CD8-positive, alpha-beta T cell (primary cell): ENCODE measurements at regions of chr2 and their contacts with region 1.

Region 1: GRCh38 chr2:127081826-127082633 is 24.9 kb downstream of the BIN1 start:
- DNase-seq: peak; percentile 67 to 94 (median 82)
- ATAC-seq: peak; percentile 66
- H3K4me3 ChIP-seq: peak overlapping the region; percentile 84 to 94
- H3K4me3 Mint-ChIP-seq: peak overlapping the region; percentile 90
- H3K27ac ChIP-seq: peak overlapping the region; percentile 94 to 96
- H3K27ac Mint-ChIP-seq: peak overlapping the region; percentile 99
- H3K4me1 ChIP-seq: peaks cover 94% of the 10 kb centered on the region
- H3K4me1 Mint-ChIP-seq: peaks cover 85% of the 10 kb centered on the region
- H3K27me3 ChIP-seq: no peaks in the 10 kb centered on the region
- H3K27me3 Mint-ChIP-seq: no peaks in the 10 kb centered on the region
- CTCF ChIP-seq: no peak

Region 2: GRCh38 chr2:127106951-127107621 is 25.1 kb after region 1 on chr2 and contains the start of gene BIN1:
- CTCF ChIA-PET with region 1: interaction called, 4 read pairs
- POLR2A ChIA-PET with region 1: interaction called, 9 read pairs
- intact Hi-C with region 1: loop called (anchors 1 kb)
- DNase-seq: peak; percentile 35 to 90 (median 69)
- ATAC-seq: peak; percentile 86
- H3K4me3 ChIP-seq: peak within 1 kb of the TSS; percentile 65 to 77
- H3K4me3 Mint-ChIP-seq: peak within 1 kb of the TSS; percentile 87
- H3K27ac ChIP-seq: peak within 1 kb of the TSS in 1 of 2 experiments; percentile 0
- H3K27ac Mint-ChIP-seq: peak within 1 kb of the TSS; percentile 12
- H3K4me1 ChIP-seq: peaks cover 6% of the 10 kb centered on the region
- H3K4me1 Mint-ChIP-seq: peaks cover 6% of the 10 kb centered on the region
- H3K27me3 ChIP-seq: peaks cover 4 to 14% of the 10 kb centered on the region in 2 experiments
- H3K27me3 Mint-ChIP-seq: peaks cover 12% of the 10 kb centered on the region
- CTCF ChIP-seq: no peak
- total RNA-seq, gene BIN1: 92.1 to 92.4 TPM

Region 3: DNA sequence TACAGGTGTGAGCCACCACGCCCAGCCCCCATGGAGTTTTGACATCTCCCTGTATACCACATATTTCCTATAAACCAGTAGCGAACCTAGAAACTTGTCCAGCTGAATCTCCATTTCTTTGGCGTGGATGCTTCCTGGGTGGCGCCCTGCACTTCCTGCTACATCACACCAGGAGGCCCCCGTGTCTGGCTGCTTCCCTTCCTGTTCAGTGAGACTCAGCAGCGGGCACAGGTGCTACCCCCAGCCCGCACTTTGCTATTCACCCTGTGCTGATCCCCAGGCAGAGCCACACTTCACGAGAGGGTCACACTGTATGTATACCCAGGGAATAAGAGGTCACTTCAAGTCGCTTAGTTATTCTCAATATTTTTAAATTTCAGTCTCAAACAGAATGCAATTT is 103.1 kb after region 1 on chr2:
- CTCF ChIA-PET with region 1: no interaction called
- POLR2A ChIA-PET with region 1: no interaction called
- intact Hi-C with region 1: no loop called
- DNase-seq: peak in 3 of 9 experiments; percentile 10 to 42 (median 20)
- ATAC-seq: no peak
- H3K4me3 ChIP-seq: no peak overlapping the region
- H3K4me3 Mint-ChIP-seq: no peak overlapping the region
- H3K27ac ChIP-seq: no peak overlapping the region
- H3K27ac Mint-ChIP-seq: no peak overlapping the region
- H3K4me1 ChIP-seq: no peaks in the 10 kb centered on the region
- H3K4me1 Mint-ChIP-seq: peaks cover 4% of the 10 kb centered on the region
- H3K27me3 ChIP-seq: peaks cover 0 to 6% of the 10 kb centered on the region in 2 experiments
- H3K27me3 Mint-ChIP-seq: peaks cover 18% of the 10 kb centered on the region
- CTCF ChIP-seq: no peak

Region 4: DNA sequence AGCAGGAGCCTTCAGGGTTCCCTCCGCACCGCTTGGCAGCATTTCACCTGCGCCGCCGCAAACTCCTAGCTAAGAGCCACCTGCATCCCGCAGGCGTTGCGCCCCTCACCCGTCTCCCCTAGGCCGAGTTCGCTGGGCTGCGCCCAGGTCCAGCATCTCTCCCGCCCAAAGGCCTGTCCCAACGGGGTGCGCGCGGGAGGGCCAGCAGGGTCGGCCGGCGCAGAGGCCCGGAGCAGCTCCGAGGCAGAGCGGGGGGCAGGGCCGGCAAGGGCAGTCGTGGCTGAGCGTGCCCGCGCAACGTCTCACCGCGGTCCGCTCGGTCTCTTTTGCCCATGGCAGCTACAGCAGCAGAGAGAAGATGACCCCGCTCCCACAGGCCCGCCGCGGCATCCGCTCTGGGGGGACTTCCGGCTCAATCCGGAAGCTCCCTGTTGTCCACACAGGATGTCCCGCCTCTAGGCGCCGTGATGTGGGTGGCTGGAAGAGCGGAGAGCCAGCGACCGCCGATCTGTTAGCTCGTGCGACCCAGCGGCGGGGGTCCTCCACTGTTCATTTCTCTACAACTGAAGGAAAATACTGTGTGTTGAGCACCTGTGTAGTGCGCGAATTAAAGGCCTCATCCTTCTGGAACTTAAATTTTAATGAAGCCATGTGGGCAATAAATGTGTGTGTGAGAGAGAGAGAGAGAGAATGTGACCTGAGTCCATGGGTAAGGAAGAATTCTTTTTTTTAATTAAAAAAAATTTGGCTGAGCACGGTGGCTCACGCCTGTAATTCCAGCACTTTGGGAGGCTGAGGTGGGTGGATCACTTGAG is 211.9 kb after region 1 on chr2 and contains the start of gene ERCC3:
- CTCF ChIA-PET with region 1: no interaction called
- POLR2A ChIA-PET with region 1: no interaction called
- intact Hi-C with region 1: loop called in 1 of 2 experiments (anchors 5 kb)
- DNase-seq: peak; percentile 56 to 90 (median 83)
- ATAC-seq: peak; percentile 91
- H3K4me3 ChIP-seq: peak within 1 kb of the TSS; percentile 75 to 91
- H3K4me3 Mint-ChIP-seq: peak within 1 kb of the TSS; percentile 94
- H3K27ac ChIP-seq: peak within 1 kb of the TSS; percentile 74 to 76
- H3K27ac Mint-ChIP-seq: peak within 1 kb of the TSS; percentile 91
- H3K4me1 ChIP-seq: peaks cover 13% of the 10 kb centered on the region
- H3K4me1 Mint-ChIP-seq: peaks cover 45% of the 10 kb centered on the region
- H3K27me3 ChIP-seq: no peaks in the 10 kb centered on the region
- H3K27me3 Mint-ChIP-seq: no peaks in the 10 kb centered on the region
- CTCF ChIP-seq: no peak
- total RNA-seq, gene ERCC3: 43.2 to 46.4 TPM

Region 5: GRCh38 chr2:127408004-127408806 is 326.2 kb after region 1 on chr2:
- CTCF ChIA-PET with region 1: no interaction called
- POLR2A ChIA-PET with region 1: no interaction called
- intact Hi-C with region 1: loop called in 1 of 2 experiments (anchors 5 kb)
- DNase-seq: peak; percentile 73 to 95 (median 90)
- ATAC-seq: peak; percentile 88
- H3K4me3 ChIP-seq: peak overlapping the region; percentile 16 to 44
- H3K4me3 Mint-ChIP-seq: peak overlapping the region; percentile 65
- H3K27ac ChIP-seq: peak overlapping the region in 1 of 2 experiments; percentile 37
- H3K27ac Mint-ChIP-seq: no peak overlapping the region
- H3K4me1 ChIP-seq: peaks cover 5% of the 10 kb centered on the region
- H3K4me1 Mint-ChIP-seq: peaks cover 12% of the 10 kb centered on the region
- H3K27me3 ChIP-seq: no peaks in the 10 kb centered on the region
- H3K27me3 Mint-ChIP-seq: no peaks in the 10 kb centered on the region
- CTCF ChIP-seq: no peak